Activated T-helper 2 cell treated with anti-CD3 and anti-CD28 coated beads, Interferon-gamma antibody, Interleukin-2, Interleukin-4, amounts not matched to agents 10 μg/mL and 5 μg/mL and 100 μg/mL, durations not matched to agents 14 hours and 24 hours and 36 hours (primary cell): ENCODE measurements at regions of chr21 and their contacts with region 1.

Region 1: DNA sequence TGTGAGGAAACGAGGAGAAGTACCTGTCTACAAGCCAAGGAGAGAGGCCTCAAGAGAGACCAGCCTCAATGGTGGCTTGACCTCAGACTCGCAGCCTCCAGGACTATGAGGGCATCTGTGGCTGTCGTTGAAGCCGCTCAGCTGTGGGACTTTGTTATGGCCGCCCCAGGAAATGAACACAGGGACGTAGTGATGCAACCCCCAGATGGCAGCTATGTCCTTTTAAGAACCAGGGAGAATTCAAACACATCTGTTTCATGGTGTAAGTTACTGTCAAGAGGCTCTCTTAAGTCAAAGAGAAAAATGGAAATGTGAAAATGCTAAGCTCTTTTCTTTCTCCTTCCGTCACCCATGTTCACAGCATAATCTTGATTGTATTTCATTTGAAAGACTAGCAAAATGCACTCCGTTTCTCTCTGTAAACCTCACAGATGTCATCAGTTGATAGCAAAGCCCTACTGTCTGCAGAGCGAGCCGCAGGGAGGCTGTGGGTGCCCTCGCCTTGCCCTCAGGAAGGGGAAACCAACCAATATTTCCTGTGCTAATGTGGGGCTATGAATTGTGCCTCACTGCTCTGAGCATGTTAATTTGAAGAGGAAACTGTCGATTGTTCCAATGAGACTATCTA is 21.3 kb downstream of the UBASH3A start:
- DNase-seq: peak; percentile 81
- H3K4me3 Mint-ChIP-seq: peak overlapping the region; percentile 68
- H3K27ac Mint-ChIP-seq: peak overlapping the region; percentile 93
- H3K4me1 Mint-ChIP-seq: peaks cover 67% of the 10 kb centered on the region
- H3K27me3 Mint-ChIP-seq: no peaks in the 10 kb centered on the region

Region 2: DNA sequence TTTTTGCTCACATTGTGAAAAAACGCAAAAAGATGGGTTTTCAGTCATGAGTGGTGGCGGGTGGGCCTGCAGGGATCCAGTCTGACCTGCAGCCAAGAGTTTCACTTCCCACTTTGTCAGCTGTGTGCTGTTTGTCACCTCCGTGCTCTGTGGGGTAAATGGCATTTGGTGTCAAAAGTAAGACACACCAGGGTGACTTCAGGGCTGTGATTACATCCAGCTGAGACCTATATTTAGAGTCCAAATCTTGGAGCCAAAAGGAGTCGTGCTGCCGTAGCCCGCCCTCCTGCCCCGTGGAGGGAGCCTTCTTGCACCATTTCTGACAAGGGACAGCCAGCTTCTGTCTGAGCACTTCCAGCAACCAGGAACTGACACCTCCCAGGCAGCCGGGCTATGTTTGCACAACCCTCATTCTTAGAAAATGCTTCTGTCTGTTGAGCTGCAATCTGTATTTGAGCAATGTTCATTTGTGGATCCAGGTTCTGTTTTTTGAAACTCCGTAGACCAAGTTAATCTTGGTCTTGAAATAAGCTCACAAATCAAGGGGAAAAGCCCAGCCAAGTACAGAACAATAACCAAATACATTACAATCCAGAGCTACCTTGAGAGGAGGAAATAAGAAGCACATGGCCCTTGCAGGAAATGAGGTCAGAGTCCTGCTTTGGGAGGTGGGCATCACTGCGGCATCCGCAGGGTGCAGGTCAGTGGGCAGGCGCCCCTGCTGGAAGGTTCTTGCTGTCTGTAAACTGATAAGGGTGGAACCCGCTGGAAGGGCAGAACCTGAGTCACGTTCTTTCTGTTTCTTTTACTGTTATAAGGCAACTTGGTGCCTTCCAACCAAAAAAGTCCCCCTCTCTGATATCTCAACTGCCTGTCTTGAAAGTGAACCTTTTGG is 191.7 kb before region 1 on chr21:
- intact Hi-C with region 1: loop called (anchors 5 kb)
- DNase-seq: peak; percentile 77
- H3K4me3 Mint-ChIP-seq: peak overlapping the region; percentile 63
- H3K27ac Mint-ChIP-seq: peak overlapping the region; percentile 93
- H3K4me1 Mint-ChIP-seq: peaks cover 85% of the 10 kb centered on the region
- H3K27me3 Mint-ChIP-seq: no peaks in the 10 kb centered on the region

Region 3: GRCh38 chr21:42392721-42393442 is 32.1 kb before region 1 on chr21:
- intact Hi-C with region 1: loop called (anchors 5 kb)
- DNase-seq: no peak
- H3K4me3 Mint-ChIP-seq: peak overlapping the region; percentile 41
- H3K27ac Mint-ChIP-seq: peak overlapping the region; percentile 87
- H3K4me1 Mint-ChIP-seq: peaks cover 84% of the 10 kb centered on the region
- H3K27me3 Mint-ChIP-seq: no peaks in the 10 kb centered on the region

Region 4: DNA sequence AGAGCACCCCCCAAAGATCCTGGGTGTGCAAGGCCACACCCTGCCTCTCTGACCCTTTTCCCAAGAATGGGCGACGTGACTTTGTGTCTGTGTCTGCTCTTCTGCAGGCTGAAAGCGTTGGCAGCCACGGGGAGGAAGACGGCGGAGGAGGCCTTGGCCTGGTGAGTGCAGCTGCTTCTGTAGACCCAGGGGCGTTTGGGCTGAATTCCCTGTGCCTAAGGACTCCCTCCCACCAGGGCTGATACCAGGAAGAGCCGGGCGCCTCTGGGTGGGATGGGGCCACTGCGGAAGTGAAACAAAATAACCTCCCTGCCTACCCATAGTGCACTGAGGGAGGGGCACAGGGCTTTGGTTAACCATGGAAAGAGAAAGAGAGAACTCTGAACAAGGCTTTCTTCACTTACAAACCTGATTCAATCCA is 18.8 kb before region 1 on chr21:
- intact Hi-C with region 1: loop called (anchors 1 kb)
- DNase-seq: peak; percentile 63
- H3K4me3 Mint-ChIP-seq: peak overlapping the region; percentile 93
- H3K27ac Mint-ChIP-seq: peak overlapping the region; percentile 90
- H3K4me1 Mint-ChIP-seq: peaks cover 38% of the 10 kb centered on the region
- H3K27me3 Mint-ChIP-seq: no peaks in the 10 kb centered on the region

Region 5: DNA sequence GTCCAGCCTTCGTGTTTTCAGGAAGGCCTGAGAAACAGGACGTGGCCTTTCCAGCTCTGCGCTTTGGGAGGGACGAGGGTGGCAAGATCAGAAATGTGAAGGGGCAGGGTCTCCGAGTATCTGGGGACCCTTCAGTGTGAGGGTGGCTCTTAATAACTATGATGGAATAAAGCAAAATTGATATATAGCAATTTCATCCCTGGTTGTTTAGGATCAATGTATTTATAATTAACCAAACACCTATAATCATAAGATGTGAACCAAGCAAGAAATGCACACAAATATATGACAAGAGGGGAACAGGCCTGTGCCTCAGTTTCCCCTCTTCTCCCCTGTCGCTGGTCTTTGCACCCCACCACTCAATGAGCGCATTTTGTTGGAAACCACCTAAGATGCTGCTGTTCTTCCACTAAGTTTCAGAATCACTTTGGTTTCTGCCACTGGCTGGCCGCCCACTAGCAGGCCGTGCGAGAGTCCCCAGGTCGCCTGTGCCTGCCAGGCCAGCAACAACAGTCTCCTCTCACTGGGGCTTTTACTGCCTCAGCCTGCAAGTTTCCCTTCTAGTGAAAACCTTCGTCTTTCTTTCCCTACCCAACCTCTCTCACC is 15.3 kb after region 1 on chr21:
- intact Hi-C with region 1: loop called (anchors 1 kb)
- DNase-seq: no peak
- H3K4me3 Mint-ChIP-seq: peak overlapping the region; percentile 14
- H3K27ac Mint-ChIP-seq: peak overlapping the region; percentile 96
- H3K4me1 Mint-ChIP-seq: peaks cover 61% of the 10 kb centered on the region
- H3K27me3 Mint-ChIP-seq: no peaks in the 10 kb centered on the region

Region 6: GRCh38 chr21:42486531-42486930 is 61.5 kb after region 1 on chr21:
- intact Hi-C with region 1: no loop called
- DNase-seq: no peak
- H3K4me3 Mint-ChIP-seq: no peak overlapping the region
- H3K27ac Mint-ChIP-seq: no peak overlapping the region
- H3K4me1 Mint-ChIP-seq: no peaks in the 10 kb centered on the region
- H3K27me3 Mint-ChIP-seq: peaks cover 47% of the 10 kb centered on the region